ENCODE measurements at regions of chr16 and their contacts with region 1.

Region 1: DNA sequence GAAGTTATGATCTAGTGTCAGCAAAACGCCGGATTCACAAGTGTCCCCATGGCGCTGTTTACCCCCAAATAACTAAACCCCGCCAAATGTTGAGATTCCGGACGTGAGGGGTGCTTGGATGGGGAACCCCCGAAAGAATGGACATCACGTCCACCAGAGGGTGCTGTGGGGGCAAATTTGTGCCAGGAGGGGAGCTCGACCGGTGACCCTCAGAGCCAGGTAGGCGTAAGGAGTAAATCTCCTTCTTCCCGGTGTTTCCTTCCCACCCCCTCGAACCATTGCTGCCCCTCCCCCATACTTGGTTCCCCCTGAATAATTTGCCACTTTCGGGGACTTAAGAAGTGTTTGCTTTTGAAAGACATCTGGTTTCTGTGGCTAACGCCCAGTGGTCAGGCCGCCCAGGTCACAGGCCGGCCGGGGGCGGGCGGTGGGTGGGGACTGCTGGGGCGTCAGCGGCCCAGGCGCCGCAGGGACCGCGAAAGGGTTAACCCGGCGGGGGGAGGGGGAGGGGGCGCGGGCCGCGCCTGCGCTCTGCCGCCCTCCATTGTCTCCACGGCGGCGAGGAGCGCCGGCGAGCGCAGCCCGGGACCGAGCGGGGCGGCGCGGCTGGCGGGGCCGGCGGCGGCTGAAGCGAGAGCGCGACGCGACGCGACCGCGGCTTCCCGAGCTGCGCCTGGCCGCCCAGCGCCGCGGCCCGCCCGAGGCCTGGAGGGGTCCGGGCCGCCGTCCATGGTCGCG is at the start of gene ZNRF1:
- DNase-seq: peak; percentile 82 to 86
- ATAC-seq: peak; percentile 84 to 88
- H3K4me3 ChIP-seq: peak within 1 kb of the TSS; percentile 80
- H3K27ac ChIP-seq: peak within 1 kb of the TSS; percentile 92 to 98
- H3K4me1 ChIP-seq: peaks cover 21% of the 10 kb centered on the region
- CTCF ChIP-seq: peak; percentile 95
- EP300 ChIP-seq: no peak; a peak in 1 of 5 replicates
- POLR2A ChIP-seq: peak; percentile 87
- RAD21 ChIP-seq: peak; percentile 88 to 95
- polyA plus RNA-seq, gene ZNRF1: 21.4 and 22.6 TPM in 2 replicates

Region 2: GRCh38 chr16:74296432-74297144 is 702.1 kb before region 1 on chr16 and contains the start of gene PSMD7:
- CTCF ChIA-PET with region 1: no interaction called
- POLR2A ChIA-PET with region 1: no interaction called
- DNase-seq: peak; percentile 87 to 95
- ATAC-seq: peak; percentile 96 to 98
- H3K4me3 ChIP-seq: peak within 1 kb of the TSS; percentile 97
- H3K27ac ChIP-seq: peak within 1 kb of the TSS; percentile 97 to 99
- H3K4me1 ChIP-seq: peaks cover 28% of the 10 kb centered on the region; the same call in 2 of the 3 replicates
- CTCF ChIP-seq: no peak
- EP300 ChIP-seq: no peak
- POLR2A ChIP-seq: peak; percentile 84
- RAD21 ChIP-seq: no peak
- polyA plus RNA-seq, gene PSMD7: 170 and 211 TPM in 2 replicates

Region 3: GRCh38 chr16:74813109-74813641 is 185.5 kb before region 1 on chr16:
- CTCF ChIA-PET with region 1: no interaction called
- POLR2A ChIA-PET with region 1: no interaction called
- DNase-seq: peak; percentile 87 to 91
- ATAC-seq: peak; percentile 99 to 100
- H3K4me3 ChIP-seq: no peak overlapping the region
- H3K27ac ChIP-seq: peak overlapping the region; percentile 39 to 74; a peak in 5 of 6 replicates
- H3K4me1 ChIP-seq: no peaks in the 10 kb centered on the region
- CTCF ChIP-seq: peak; percentile 96
- EP300 ChIP-seq: no peak
- POLR2A ChIP-seq: no peak
- RAD21 ChIP-seq: peak; percentile 88 to 96

Region 4: GRCh38 chr16:74984535-74985296 is 13.9 kb before region 1 on chr16 and contains the start of gene WDR59:
- CTCF ChIA-PET with region 1: interaction called, 50 read pairs
- POLR2A ChIA-PET with region 1: interaction called, 14 read pairs
- DNase-seq: peak; percentile 54 to 94
- ATAC-seq: peak; percentile 99
- H3K4me3 ChIP-seq: peak within 1 kb of the TSS; percentile 100
- H3K27ac ChIP-seq: peak within 1 kb of the TSS; percentile 92 to 94
- H3K4me1 ChIP-seq: 0 out of 3 replicates have a peak, but pooled peaks cover 2% of the 10 kb centered on the region
- CTCF ChIP-seq: no peak
- EP300 ChIP-seq: no peak
- POLR2A ChIP-seq: peak; percentile 72
- RAD21 ChIP-seq: no peak
- polyA plus RNA-seq, gene WDR59: 52.2 and 57.2 TPM in 2 replicates

Region 5: DNA sequence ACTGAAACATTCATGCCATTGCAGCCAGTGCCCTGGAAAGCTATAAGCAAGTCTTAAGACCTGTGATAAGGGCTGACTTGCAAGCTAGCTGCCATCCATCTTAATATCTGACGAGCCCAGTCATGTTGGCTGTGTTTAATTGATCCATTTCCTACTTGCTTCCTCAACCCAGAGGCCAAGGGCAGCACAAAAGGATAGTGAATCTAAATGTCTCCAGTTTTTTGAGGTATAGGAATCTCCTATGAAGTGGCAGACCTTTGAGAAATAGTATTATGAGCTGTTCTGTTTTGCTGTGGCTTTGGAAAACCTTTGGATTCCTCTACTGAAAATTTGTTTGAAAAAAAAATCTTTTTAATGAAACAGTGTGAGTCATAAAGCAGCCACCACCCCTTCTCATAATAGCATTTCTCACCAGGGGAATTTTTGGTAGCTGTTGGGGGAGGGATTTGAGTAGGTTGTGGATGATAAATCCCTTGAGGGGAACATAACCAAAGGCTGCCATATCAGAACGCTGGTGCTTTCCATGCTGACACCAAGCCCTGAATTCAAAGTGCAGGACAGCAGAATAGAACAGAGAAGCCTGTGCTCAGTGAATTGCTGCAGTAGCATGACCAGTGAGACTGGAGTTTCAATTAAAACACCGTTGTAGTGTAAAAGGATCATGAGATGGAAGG is 13.1 kb after region 1 on chr16:
- CTCF ChIA-PET with region 1: interaction called, 33 read pairs
- POLR2A ChIA-PET with region 1: no interaction called
- DNase-seq: peak in 1 of 2 experiments; percentile 59
- ATAC-seq: peak; percentile 60 to 74
- H3K4me3 ChIP-seq: no peak overlapping the region
- H3K27ac ChIP-seq: peak overlapping the region; percentile 49 to 71; a peak in 5 of 6 replicates
- H3K4me1 ChIP-seq: peaks cover 29% of the 10 kb centered on the region
- CTCF ChIP-seq: no peak
- EP300 ChIP-seq: no peak
- POLR2A ChIP-seq: no peak
- RAD21 ChIP-seq: no peak

Region 6: DNA sequence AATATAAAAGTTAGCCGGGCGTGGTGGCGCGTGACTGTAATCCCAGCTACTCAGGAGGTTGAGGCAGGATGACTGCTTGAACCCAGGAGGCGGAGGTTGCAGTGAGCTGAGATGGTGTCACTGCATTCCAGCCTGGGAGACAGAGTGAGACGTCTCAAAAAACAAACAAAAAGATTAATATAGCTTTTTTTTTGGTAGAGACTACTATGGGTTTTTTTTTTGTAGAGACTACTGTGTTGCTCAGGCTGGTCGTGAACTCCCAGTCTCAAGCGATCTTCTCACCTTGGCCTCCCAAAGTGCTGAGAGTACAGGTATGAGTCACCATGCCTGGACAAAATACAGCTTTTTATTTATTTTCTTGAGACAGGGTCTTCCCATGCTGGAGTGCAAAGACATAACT is 20.4 kb after region 1 on chr16:
- CTCF ChIA-PET with region 1: interaction called, 11 read pairs
- POLR2A ChIA-PET with region 1: no interaction called
- DNase-seq: peak in 1 of 2 experiments; percentile 54
- ATAC-seq: peak; percentile 47 to 59; a peak in 3 of 6 replicates
- H3K4me3 ChIP-seq: no peak overlapping the region
- H3K27ac ChIP-seq: peak overlapping the region; percentile 67 to 80
- H3K4me1 ChIP-seq: peaks cover 32% of the 10 kb centered on the region
- CTCF ChIP-seq: no peak
- EP300 ChIP-seq: peak in 1 of 2 experiments; percentile 14; a peak in 1 of 5 replicates
- POLR2A ChIP-seq: no peak
- RAD21 ChIP-seq: no peak

Region 7: GRCh38 chr16:75062135-75062975 is 63.7 kb after region 1 on chr16:
- CTCF ChIA-PET with region 1: interaction called, 12 read pairs
- POLR2A ChIA-PET with region 1: no interaction called
- DNase-seq: no peak
- ATAC-seq: no peak
- H3K4me3 ChIP-seq: no peak overlapping the region
- H3K27ac ChIP-seq: peak overlapping the region; percentile 23 to 66; a peak in 3 of 6 replicates
- H3K4me1 ChIP-seq: peaks cover 27% of the 10 kb centered on the region
- CTCF ChIP-seq: no peak
- EP300 ChIP-seq: no peak
- POLR2A ChIP-seq: no peak
- RAD21 ChIP-seq: no peak

Region 8: DNA sequence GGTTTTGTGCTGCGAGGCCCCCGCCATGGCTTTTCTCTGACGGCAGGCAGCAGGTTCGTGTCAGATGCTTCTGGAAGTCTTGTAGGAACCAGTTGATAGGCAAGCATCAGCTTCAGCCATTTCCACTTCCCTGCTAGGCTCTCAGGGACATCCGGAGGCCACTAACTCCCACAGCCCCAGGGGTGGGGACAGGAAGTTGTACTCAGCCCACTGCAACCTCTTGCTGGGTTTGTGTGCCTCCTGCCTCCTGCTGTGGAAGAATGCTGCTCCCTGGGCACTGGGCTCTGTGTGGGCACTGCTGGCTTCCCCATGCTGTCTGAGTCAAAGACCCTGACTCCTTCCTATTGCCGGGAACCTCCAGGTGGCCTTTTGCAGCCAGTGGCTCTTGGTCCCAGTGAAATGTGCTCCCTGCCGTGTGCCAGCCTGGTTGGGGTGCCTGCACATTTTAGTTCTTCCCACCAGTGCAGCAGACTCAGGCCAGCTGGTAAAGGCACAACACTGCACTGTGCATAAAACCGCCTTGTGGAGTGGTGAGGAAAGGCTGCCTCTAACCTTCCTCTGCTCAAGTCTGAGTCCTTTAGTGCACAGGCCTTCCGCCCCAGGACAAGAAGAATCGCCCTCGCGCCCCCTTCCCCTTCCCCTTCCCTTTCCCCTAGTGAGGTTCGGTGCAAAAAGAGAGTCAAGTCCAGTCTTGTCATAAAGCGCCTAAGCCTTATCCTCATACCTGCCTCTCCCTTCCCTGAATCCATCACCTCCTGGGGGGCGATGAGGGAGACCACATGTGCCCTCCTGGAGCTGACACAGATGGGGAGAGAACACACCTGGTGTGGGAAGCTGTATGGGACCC is 101.3 kb after region 1 on chr16:
- CTCF ChIA-PET with region 1: interaction called, 17 read pairs
- POLR2A ChIA-PET with region 1: no interaction called
- DNase-seq: no peak
- ATAC-seq: peak; percentile 32 to 37; a peak in 2 of 6 replicates
- H3K4me3 ChIP-seq: no peak overlapping the region
- H3K27ac ChIP-seq: 0 out of 6 replicates have a peak overlapping the region, but pooled peaks of 1 of the 2 experiments have one; percentile 0
- H3K4me1 ChIP-seq: no peaks in the 10 kb centered on the region
- CTCF ChIP-seq: no peak
- EP300 ChIP-seq: no peak
- POLR2A ChIP-seq: no peak
- RAD21 ChIP-seq: no peak

Region 9: GRCh38 chr16:75105306-75106061 is 106.8 kb after region 1 on chr16:
- CTCF ChIA-PET with region 1: interaction called, 252 read pairs
- POLR2A ChIA-PET with region 1: interaction called, 6 read pairs
- DNase-seq: no peak
- ATAC-seq: no peak
- H3K4me3 ChIP-seq: no peak overlapping the region
- H3K27ac ChIP-seq: no peak overlapping the region
- H3K4me1 ChIP-seq: peaks cover 26% of the 10 kb centered on the region
- CTCF ChIP-seq: no peak
- EP300 ChIP-seq: no peak
- POLR2A ChIP-seq: no peak
- RAD21 ChIP-seq: no peak